ENCODE measurements at regions of chr1 and their contacts with region 1.

Region 1: GRCh38 chr1:53393325-53393792 is 65.5 kb upstream of the LRP8 start:
- DNase-seq: peak; percentile 78 to 88
- H3K4me3 ChIP-seq: no peak overlapping the region
- H3K27ac ChIP-seq: no peak overlapping the region
- H3K4me1 ChIP-seq: peaks cover 22 to 30% of the 10 kb centered on the region in 2 donors
- H3K27me3 ChIP-seq: no peaks in the 10 kb centered on the region
- CTCF ChIP-seq: peak; percentile 87 to 93 (median 90)
- POLR2A ChIP-seq: no peak

Region 2: DNA sequence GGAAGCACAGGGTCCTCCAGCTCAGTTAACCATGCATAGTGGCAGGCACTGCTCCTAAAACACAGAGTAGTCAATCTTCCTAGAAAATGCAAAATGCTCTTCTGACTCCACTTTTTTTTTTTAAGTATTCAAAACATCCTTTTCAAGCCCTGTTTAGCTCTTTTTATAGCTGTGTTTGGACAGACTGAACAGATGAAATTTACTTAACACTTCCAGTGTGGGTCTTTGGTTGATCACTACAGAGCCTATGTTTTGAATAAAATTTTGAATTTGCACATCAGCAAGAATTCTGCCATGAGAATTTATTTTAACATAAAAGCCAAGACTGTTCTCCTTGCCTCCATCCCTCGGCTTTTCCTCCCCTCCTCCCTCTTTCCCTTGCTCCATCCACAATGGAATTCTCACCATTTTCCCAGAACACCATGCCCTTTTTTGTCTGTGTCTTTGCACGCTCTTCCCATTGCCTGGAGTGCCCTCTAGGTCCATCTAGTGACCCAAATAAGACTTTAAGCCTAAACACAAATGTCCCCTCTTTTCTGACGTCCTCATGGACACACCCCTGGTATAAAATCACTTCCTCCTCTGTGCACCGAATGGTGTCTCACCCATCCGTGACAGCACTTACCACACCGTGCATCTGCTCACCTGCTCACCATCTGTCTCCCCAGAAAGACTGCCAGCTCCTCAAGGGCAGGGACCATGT is 220.8 kb before region 1 on chr1:
- intact Hi-C with region 1: no loop called
- DNase-seq: no peak
- H3K4me3 ChIP-seq: no peak overlapping the region
- H3K27ac ChIP-seq: no peak overlapping the region
- H3K4me1 ChIP-seq: peaks cover 0 to 8% of the 10 kb centered on the region in 2 donors
- H3K27me3 ChIP-seq: no peaks in the 10 kb centered on the region
- CTCF ChIP-seq: no peak
- POLR2A ChIP-seq: no peak

Region 3: DNA sequence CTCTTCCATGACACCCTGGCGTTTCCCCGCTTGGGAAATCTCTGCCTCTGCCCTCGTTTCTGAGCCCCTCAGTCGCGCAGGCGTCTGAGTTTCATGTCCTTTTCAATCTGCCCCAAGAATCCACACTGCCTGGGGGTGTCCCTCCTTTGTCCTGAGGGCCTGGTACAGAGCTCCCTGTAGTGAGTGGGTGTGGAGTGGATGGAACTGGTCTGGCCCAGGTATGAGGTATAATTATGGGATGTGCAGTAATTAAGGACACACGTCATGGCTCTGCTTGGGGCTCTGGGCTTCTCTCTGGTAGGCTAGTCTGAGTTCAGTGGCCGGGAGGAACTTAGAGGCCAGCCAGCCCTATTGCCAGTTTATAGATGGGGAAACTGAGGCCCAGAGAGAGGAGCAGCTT is 115.6 kb before region 1 on chr1:
- intact Hi-C with region 1: loop called (anchors 2 kb)
- DNase-seq: no peak
- H3K4me3 ChIP-seq: no peak overlapping the region
- H3K27ac ChIP-seq: no peak overlapping the region
- H3K4me1 ChIP-seq: no peaks in the 10 kb centered on the region
- H3K27me3 ChIP-seq: no peaks in the 10 kb centered on the region
- CTCF ChIP-seq: no peak
- POLR2A ChIP-seq: no peak

Measured in thyroid gland (tissue), 4 donors.